B cell (primary cell): ENCODE measurements at regions of chr7 and their contacts with region 1.

Region 1: DNA sequence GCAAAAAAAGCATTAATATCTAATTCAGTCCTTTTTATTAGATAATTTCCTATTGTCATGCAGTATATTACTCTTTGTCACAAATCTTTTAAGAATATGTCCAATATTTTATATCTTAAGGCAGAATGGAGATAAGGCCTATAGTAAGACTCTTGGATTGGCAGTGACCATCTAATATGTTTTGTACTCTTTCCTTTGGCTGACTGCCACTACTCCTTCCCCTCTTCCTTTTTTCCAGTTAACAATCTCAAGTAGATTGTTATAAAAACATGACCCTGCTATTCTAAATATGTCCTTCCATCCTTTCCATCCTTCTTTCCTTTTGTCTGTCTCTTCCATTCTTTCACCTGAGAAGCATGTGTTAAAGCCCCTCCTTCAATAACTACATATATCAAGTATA is 92.8 kb upstream of the TMEM168 start:
- DNase-seq: no peak
- ATAC-seq: no peak
- H3K4me3 ChIP-seq: no peak overlapping the region
- H3K4me3 Mint-ChIP-seq: no peak overlapping the region
- H3K27ac ChIP-seq: peak overlapping the region in 1 of 2 donors; percentile 10
- H3K27ac Mint-ChIP-seq: peak overlapping the region; percentile 66
- H3K4me1 ChIP-seq: peaks cover 14 to 17% of the 10 kb centered on the region in 2 donors
- H3K4me1 Mint-ChIP-seq: peaks cover 33% of the 10 kb centered on the region
- H3K27me3 ChIP-seq: no peaks in the 10 kb centered on the region
- H3K27me3 Mint-ChIP-seq: no peaks in the 10 kb centered on the region
- CTCF ChIP-seq: no peak

Region 2: GRCh38 chr7:112001089-112001826 is 881.7 kb before region 1 on chr7:
- CTCF ChIA-PET with region 1: no interaction called
- POLR2A ChIA-PET with region 1: no interaction called
- intact Hi-C with region 1: no loop called
- DNase-seq: no peak
- ATAC-seq: no peak
- H3K4me3 ChIP-seq: no peak overlapping the region
- H3K4me3 Mint-ChIP-seq: no peak overlapping the region
- H3K27ac ChIP-seq: no peak overlapping the region
- H3K27ac Mint-ChIP-seq: no peak overlapping the region
- H3K4me1 ChIP-seq: no peaks in the 10 kb centered on the region
- H3K4me1 Mint-ChIP-seq: no peaks in the 10 kb centered on the region
- H3K27me3 ChIP-seq: no peaks in the 10 kb centered on the region
- H3K27me3 Mint-ChIP-seq: no peaks in the 10 kb centered on the region
- CTCF ChIP-seq: no peak

Region 3: DNA sequence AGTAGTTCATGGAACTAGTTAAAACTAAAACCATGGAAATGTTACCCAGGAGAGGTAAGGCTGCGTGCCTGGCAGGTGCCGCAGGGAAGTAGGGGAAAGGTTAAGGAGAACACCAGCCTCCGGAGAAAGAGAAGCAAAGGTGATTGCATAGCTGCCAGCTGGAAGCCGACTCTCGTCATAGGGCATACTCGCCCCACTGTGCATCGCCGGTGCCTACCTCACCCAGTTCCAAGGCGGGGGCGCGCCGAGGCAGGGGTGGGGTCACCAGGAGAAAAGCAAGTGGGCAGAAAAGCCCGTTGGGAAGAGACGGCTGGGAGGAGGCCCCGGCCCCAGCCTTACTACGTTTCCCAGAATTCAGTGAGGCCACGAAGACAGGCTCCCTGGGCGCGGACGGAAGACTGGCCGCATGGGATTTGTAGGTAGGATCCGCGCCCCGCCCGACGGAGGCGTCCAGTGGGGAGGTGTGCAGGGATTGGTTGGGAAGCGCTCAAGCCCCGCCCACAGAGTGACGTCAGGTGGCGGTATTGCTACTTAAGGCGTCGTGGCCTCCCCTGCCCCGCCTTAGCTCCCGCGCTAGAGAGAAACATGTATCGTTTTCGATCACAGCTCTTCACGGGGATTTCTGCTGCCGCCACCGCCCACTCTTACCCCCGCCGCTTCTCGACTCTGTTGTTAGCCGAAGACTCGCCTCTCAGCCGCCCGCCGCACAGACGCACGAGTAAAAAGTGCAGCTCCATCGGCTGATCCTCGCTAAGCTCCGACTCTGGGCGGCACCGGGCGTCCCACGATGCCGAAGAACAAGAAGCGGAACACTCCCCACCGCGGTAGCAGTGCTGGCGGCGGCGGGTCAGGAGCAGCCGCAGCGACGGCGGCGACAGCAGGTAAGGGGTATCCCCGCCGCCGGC is 432.8 kb before region 1 on chr7 and contains the start of gene IFRD1:
- CTCF ChIA-PET with region 1: no interaction called
- POLR2A ChIA-PET with region 1: no interaction called
- intact Hi-C with region 1: loop called (anchors 10 kb)
- DNase-seq: peak; percentile 99
- ATAC-seq: peak; percentile 84
- H3K4me3 ChIP-seq: peak within 1 kb of the TSS; percentile 80 to 100 (median 95)
- H3K4me3 Mint-ChIP-seq: peak within 1 kb of the TSS; percentile 95
- H3K27ac ChIP-seq: peak within 1 kb of the TSS; percentile 98 to 99
- H3K27ac Mint-ChIP-seq: peak within 1 kb of the TSS; percentile 98
- H3K4me1 ChIP-seq: peaks cover 16 to 19% of the 10 kb centered on the region in 2 donors
- H3K4me1 Mint-ChIP-seq: peaks cover 38% of the 10 kb centered on the region
- H3K27me3 ChIP-seq: no peaks in the 10 kb centered on the region
- H3K27me3 Mint-ChIP-seq: no peaks in the 10 kb centered on the region
- CTCF ChIP-seq: no peak
- total RNA-seq, gene IFRD1: 101 and 106 TPM in 2 replicates

Region 4: DNA sequence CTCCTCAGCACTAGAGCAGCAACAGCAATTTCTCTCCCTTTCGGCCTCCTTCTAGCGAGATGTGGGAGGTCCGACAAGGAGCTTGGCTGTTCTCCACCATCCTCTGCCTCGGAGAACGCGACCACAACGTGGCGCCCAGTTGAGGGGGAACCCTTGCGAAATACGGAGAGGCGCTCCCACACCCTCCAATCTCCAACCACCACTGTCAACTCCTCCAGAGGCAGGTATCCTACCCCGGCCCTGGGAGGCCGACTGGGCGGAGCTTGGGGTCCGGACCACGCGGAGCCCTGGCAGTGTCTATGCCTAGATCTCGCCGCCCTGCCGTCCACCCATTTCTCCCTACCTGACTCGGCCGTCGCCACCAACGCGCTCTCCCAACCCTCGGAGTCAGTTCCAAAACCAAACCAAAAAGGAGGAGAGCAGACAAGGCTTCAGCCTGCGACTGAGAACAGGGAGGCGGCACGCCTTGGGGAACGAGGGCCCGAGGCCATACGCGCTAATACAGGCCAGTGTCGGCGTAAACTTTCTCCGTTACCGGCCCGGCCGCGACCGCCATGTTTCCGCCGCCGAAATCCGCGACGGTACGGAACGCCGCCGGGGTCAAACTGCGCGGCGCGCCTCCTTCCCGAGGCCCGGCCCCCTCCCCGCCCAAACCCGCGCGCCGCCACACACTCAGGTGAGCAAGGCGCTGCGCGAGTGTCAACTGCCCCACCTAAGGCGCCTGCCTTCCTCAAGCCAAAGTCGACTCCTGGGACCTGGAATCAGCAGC is 93.0 kb before region 1 on chr7 and contains the start of gene TMEM168:
- CTCF ChIA-PET with region 1: no interaction called
- POLR2A ChIA-PET with region 1: no interaction called
- intact Hi-C with region 1: loop called (anchors 5 kb)
- DNase-seq: peak; percentile 92
- ATAC-seq: peak; percentile 83
- H3K4me3 ChIP-seq: peak within 1 kb of the TSS; percentile 83 to 96 (median 90)
- H3K4me3 Mint-ChIP-seq: peak within 1 kb of the TSS; percentile 92
- H3K27ac ChIP-seq: peak within 1 kb of the TSS; percentile 91 to 93
- H3K27ac Mint-ChIP-seq: peak within 1 kb of the TSS; percentile 92
- H3K4me1 ChIP-seq: peaks cover 16 to 23% of the 10 kb centered on the region in 2 donors
- H3K4me1 Mint-ChIP-seq: peaks cover 43% of the 10 kb centered on the region
- H3K27me3 ChIP-seq: no peaks in the 10 kb centered on the region
- H3K27me3 Mint-ChIP-seq: no peaks in the 10 kb centered on the region
- CTCF ChIP-seq: no peak
- total RNA-seq, gene TMEM168: 30.0 and 31.8 TPM in 2 replicates

Region 5: DNA sequence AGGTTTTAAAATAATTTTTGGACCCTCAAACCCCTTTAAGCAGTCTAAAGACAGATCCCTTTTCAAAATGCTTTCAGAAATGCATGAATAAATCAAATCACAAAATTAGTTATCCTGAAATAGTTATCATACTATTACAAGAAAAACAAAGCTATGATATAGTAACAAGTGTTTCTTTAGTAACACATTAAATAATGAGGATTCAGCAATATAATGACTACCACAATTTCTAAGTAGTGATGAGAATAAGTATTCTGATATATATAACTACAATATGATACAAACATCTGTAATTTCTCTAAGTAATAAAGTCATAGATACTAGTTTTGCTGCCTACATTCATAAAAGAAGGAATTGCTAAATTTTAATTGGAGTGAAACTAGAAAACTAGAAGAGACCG is 39.8 kb before region 1 on chr7:
- CTCF ChIA-PET with region 1: no interaction called
- POLR2A ChIA-PET with region 1: no interaction called
- intact Hi-C with region 1: no loop called
- DNase-seq: no peak
- ATAC-seq: no peak
- H3K4me3 ChIP-seq: no peak overlapping the region
- H3K4me3 Mint-ChIP-seq: no peak overlapping the region
- H3K27ac ChIP-seq: no peak overlapping the region
- H3K27ac Mint-ChIP-seq: no peak overlapping the region
- H3K4me1 ChIP-seq: no peaks in the 10 kb centered on the region
- H3K4me1 Mint-ChIP-seq: peaks cover 31% of the 10 kb centered on the region
- H3K27me3 ChIP-seq: no peaks in the 10 kb centered on the region
- H3K27me3 Mint-ChIP-seq: no peaks in the 10 kb centered on the region
- CTCF ChIP-seq: no peak

Region 6: DNA sequence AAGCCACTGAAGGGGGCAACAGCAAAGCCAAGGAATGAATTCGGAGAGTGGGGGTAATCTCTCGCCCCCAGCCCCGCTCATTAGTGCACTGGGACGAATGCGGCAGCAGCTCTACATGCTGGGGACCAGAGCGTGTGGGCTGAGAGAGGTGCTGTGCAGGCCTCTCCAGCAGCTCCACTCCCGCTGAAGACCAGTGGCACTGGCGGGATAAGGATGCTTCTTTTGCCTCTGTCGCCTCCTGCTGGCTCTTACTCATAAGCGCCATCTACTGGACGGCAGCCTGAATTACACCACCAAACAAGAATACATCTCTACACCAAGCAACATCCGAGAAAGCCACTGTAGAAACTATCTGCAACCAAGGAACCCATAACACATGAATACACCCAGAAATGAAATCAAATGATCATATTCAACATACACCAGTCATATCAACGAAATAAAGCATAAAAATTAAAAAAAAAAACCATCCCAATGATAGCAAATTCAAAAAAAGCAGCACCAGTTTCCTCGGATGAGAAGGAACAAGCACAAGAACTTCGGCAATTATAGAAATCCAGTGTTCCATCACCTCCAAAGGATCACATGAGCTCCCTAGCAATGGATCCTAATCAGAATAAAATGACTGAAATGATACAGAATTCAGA is 13.8 kb before region 1 on chr7:
- CTCF ChIA-PET with region 1: interaction called, 11 read pairs
- POLR2A ChIA-PET with region 1: no interaction called
- intact Hi-C with region 1: no loop called
- DNase-seq: peak; percentile 63
- ATAC-seq: peak; percentile 76
- H3K4me3 ChIP-seq: no peak overlapping the region
- H3K4me3 Mint-ChIP-seq: no peak overlapping the region
- H3K27ac ChIP-seq: no peak overlapping the region
- H3K27ac Mint-ChIP-seq: no peak overlapping the region
- H3K4me1 ChIP-seq: peaks cover 13 to 15% of the 10 kb centered on the region in 2 donors
- H3K4me1 Mint-ChIP-seq: peaks cover 56% of the 10 kb centered on the region
- H3K27me3 ChIP-seq: no peaks in the 10 kb centered on the region
- H3K27me3 Mint-ChIP-seq: no peaks in the 10 kb centered on the region
- CTCF ChIP-seq: peak; percentile 94

Region 7: GRCh38 chr7:113026941-113027340 is 143.9 kb after region 1 on chr7:
- CTCF ChIA-PET with region 1: no interaction called
- POLR2A ChIA-PET with region 1: no interaction called
- intact Hi-C with region 1: no loop called
- DNase-seq: no peak
- ATAC-seq: no peak
- H3K4me3 ChIP-seq: no peak overlapping the region
- H3K4me3 Mint-ChIP-seq: no peak overlapping the region
- H3K27ac ChIP-seq: no peak overlapping the region
- H3K27ac Mint-ChIP-seq: no peak overlapping the region
- H3K4me1 ChIP-seq: no peaks in the 10 kb centered on the region
- H3K4me1 Mint-ChIP-seq: no peaks in the 10 kb centered on the region
- H3K27me3 ChIP-seq: no peaks in the 10 kb centered on the region
- H3K27me3 Mint-ChIP-seq: peaks cover 10% of the 10 kb centered on the region
- CTCF ChIP-seq: no peak